Activated CD4-positive, alpha-beta memory T cell treated with anti-CD3 and anti-CD28 coated beads for 36 hours (primary cell): ENCODE measurements at regions of chr2 and their contacts with region 1.

Region 1: GRCh38 chr2:213251618-213252017 is 32.6 kb upstream of the SPAG16 start:
- DNase-seq: no peak
- H3K4me3 Mint-ChIP-seq: no peak overlapping the region
- H3K27ac Mint-ChIP-seq: no peak overlapping the region
- H3K4me1 Mint-ChIP-seq: no peaks in the 10 kb centered on the region
- H3K27me3 Mint-ChIP-seq: peaks cover 3% of the 10 kb centered on the region

Region 2: GRCh38 chr2:212863185-212863588 is 388.4 kb before region 1 on chr2:
- CTCF ChIA-PET with region 1: no interaction called
- POLR2A ChIA-PET with region 1: no interaction called
- intact Hi-C with region 1: loop called (anchors 5 kb)
- DNase-seq: peak; percentile 41
- H3K4me3 Mint-ChIP-seq: no peak overlapping the region
- H3K27ac Mint-ChIP-seq: no peak overlapping the region
- H3K4me1 Mint-ChIP-seq: no peaks in the 10 kb centered on the region
- H3K27me3 Mint-ChIP-seq: no peaks in the 10 kb centered on the region

Region 3: GRCh38 chr2:213934560-213934959 is 682.9 kb after region 1 on chr2:
- CTCF ChIA-PET with region 1: interaction called, 4 read pairs
- POLR2A ChIA-PET with region 1: no interaction called
- intact Hi-C with region 1: loop called (anchors 1 kb)
- DNase-seq: no peak
- H3K4me3 Mint-ChIP-seq: no peak overlapping the region
- H3K27ac Mint-ChIP-seq: no peak overlapping the region
- H3K4me1 Mint-ChIP-seq: no peaks in the 10 kb centered on the region
- H3K27me3 Mint-ChIP-seq: peaks cover 3% of the 10 kb centered on the region